OCI-LY7 (cell line): ENCODE measurements at regions of chr7 and their contacts with region 1.

Region 1: GRCh38 chr7:50418086-50418515 is 32.0 kb downstream of the FIGNL1 start:
- DNase-seq: peak; percentile 88
- H3K4me3 ChIP-seq: no peak overlapping the region
- H3K27ac ChIP-seq: no peak overlapping the region
- H3K4me1 ChIP-seq: peaks cover 29% of the 10 kb centered on the region
- CTCF ChIP-seq: peak; percentile 98

Region 2: DNA sequence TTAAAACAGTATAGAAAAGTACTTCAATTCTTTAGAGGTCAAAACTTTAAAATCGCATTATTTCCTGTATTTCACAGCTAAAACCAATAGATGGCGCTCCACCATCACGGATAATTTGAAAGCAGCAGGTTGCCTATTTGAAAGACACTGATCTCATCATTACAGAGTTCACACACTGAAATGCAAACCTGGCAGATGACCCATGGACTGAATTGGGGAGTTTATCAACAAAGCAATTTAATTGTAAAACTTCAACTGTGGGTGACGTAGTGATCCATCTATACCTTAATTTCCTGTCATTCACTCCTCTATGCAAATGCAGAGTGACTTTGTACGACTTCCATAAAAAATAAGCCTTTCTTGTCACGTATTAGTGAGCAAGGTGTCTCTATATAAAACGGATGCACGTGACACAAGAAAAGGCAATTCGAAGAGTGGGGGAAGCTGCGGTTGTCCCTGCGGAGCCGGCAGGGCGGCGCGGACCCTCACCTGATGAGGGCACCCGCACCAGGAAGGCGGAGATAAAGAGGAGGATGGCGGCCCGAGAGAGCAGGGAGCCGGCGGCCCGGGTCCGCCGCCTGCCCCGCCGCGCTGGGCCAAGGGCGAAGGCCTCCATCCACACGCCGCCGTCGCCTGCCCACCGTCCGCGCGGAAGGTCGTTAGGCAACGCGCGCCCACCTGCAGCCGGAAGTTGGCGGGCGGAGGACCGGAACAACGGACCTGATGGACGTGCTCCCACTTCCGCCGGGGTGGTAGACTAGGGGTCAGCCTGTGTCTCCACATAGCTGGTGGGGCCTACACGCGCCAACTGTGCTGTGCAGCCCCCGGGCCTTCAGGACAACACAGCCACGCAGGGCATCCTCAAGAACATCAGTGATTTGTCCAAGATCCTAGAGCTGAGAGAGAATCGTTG is 325.3 kb before region 1 on chr7 and contains the start of gene ZPBP:
- CTCF ChIA-PET with region 1: no interaction called
- POLR2A ChIA-PET with region 1: no interaction called
- intact Hi-C with region 1: loop called (anchors 1 kb)
- DNase-seq: peak; percentile 69
- H3K4me3 ChIP-seq: no peak within 1 kb of the TSS
- H3K27ac ChIP-seq: no peak within 1 kb of the TSS
- H3K4me1 ChIP-seq: peaks cover 5% of the 10 kb centered on the region
- CTCF ChIP-seq: peak; percentile 99
- total RNA-seq, gene ZPBP: not detected in 2 replicates

Region 3: DNA sequence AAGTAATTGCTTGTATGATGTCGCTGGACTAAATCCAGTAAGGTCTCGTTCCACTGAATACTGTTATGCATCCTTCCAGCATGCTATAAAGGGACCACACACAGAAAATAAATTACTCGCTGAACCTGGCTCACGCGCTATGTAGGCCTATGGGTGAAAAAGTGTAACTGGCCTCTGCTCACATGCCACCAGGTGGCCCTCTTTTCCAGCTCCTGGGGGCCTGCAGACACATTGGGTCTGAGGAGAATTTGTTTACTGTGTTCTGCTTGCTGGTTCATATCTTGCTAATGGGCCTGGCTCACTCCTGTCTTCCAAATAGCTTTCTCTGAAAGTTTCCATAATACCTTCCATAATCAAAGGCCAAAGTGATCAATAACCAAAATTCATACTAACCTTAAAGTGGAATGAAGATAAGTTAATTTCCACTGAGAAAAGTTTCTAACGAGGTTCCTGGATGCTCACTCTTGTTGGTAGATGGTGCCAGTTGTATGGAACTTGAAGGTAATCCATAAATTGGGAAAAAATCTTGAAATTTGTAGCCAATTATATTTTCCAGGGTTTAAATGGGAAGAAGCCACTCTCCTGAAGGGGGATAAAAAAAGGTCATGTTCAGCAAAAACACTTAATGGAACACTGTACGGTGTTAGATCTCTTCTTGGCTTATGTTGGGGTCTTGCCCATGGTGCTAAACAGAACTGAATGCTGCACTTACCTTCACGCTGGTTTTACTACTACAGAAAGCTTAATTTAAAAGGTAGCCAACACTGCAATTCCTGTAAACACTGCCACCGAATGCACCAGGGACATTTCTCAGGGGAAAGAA is 298.1 kb before region 1 on chr7:
- CTCF ChIA-PET with region 1: interaction called, 3 read pairs
- POLR2A ChIA-PET with region 1: no interaction called
- intact Hi-C with region 1: loop called (anchors 1 kb)
- DNase-seq: peak; percentile 80
- H3K4me3 ChIP-seq: no peak overlapping the region
- H3K27ac ChIP-seq: no peak overlapping the region
- H3K4me1 ChIP-seq: peaks cover 22% of the 10 kb centered on the region
- CTCF ChIP-seq: peak; percentile 97

Region 4: DNA sequence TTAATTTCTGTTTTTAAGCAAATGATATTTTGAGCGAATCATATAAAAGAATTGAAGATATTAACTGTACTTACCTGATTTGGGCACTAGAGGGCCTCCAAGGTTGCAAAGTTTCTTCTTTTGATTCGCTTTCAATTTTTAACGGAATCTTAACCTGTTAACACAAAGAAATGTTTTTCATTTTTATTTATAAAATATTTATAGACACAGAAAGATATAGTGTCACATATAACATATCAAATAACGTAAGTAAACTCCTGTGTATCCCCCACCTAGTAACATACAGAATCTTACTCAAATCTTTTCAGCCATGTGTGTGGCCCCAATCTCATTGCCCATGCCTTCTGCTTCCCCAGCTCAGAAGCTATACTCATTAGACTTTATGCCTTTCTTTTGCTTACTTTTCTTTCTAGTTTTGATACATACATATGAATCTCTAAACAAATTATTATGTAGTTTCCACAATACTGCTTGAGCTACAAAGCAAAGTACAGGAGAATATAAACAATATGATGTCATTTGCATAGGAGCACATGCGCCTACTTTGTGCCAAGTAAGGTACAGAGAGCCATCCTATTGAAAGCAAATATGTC is 275.6 kb before region 1 on chr7:
- CTCF ChIA-PET with region 1: interaction called, 9 read pairs
- POLR2A ChIA-PET with region 1: interaction called, 5 read pairs
- intact Hi-C with region 1: loop called (anchors 1 kb)
- DNase-seq: peak; percentile 80
- H3K4me3 ChIP-seq: no peak overlapping the region
- H3K27ac ChIP-seq: peak overlapping the region; percentile 99
- H3K4me1 ChIP-seq: peaks cover 70% of the 10 kb centered on the region
- CTCF ChIP-seq: peak; percentile 96

Region 5: GRCh38 chr7:50212666-50213621 is 205.2 kb before region 1 on chr7:
- CTCF ChIA-PET with region 1: no interaction called
- POLR2A ChIA-PET with region 1: no interaction called
- intact Hi-C with region 1: loop called (anchors 2 kb)
- DNase-seq: peak; percentile 41
- H3K4me3 ChIP-seq: no peak overlapping the region
- H3K27ac ChIP-seq: no peak overlapping the region
- H3K4me1 ChIP-seq: no peaks in the 10 kb centered on the region
- CTCF ChIP-seq: 0 out of 2 replicates have a peak, but pooled peaks have one; percentile 15

Region 6: GRCh38 chr7:50369143-50370026 is 48.7 kb before region 1 on chr7:
- CTCF ChIA-PET with region 1: interaction called, 3 read pairs
- POLR2A ChIA-PET with region 1: interaction called, 6 read pairs
- intact Hi-C with region 1: loop called (anchors 2 kb)
- DNase-seq: peak; percentile 83
- H3K4me3 ChIP-seq: no peak overlapping the region
- H3K27ac ChIP-seq: peak overlapping the region; percentile 30
- H3K4me1 ChIP-seq: peaks cover 17% of the 10 kb centered on the region
- CTCF ChIP-seq: peak; percentile 100

Region 7: GRCh38 chr7:50610521-50611277 is 192.6 kb after region 1 on chr7:
- CTCF ChIA-PET with region 1: no interaction called
- POLR2A ChIA-PET with region 1: no interaction called
- intact Hi-C with region 1: no loop called
- DNase-seq: no peak
- H3K4me3 ChIP-seq: no peak overlapping the region
- H3K27ac ChIP-seq: no peak overlapping the region
- H3K4me1 ChIP-seq: no peaks in the 10 kb centered on the region
- CTCF ChIP-seq: no peak